BJ (cell line): ENCODE measurements at regions of chr15 and their contacts with region 1.

Region 1: GRCh38 chr15:63030101-63030551 is 12.4 kb upstream of the TPM1 start:
- DNase-seq: peak; percentile 76
- H3K4me3 ChIP-seq: no peak overlapping the region
- H3K27me3 ChIP-seq: no peaks in the 10 kb centered on the region
- CTCF ChIP-seq: no peak

Region 2: GRCh38 chr15:62770752-62771151 is 259.4 kb before region 1 on chr15:
- CTCF ChIA-PET with region 1: interaction called, 3 read pairs
- POLR2A ChIA-PET with region 1: interaction called, 14 read pairs
- DNase-seq: peak; percentile 68
- H3K4me3 ChIP-seq: no peak overlapping the region
- H3K27me3 ChIP-seq: no peaks in the 10 kb centered on the region
- CTCF ChIP-seq: 0 out of 2 replicates have a peak, but pooled peaks have one; percentile 2

Region 3: GRCh38 chr15:62989366-62990055 is 40.6 kb before region 1 on chr15:
- CTCF ChIA-PET with region 1: no interaction called
- POLR2A ChIA-PET with region 1: no interaction called
- DNase-seq: no peak
- H3K4me3 ChIP-seq: no peak overlapping the region
- H3K27me3 ChIP-seq: no peaks in the 10 kb centered on the region
- CTCF ChIP-seq: no peak

Region 4: DNA sequence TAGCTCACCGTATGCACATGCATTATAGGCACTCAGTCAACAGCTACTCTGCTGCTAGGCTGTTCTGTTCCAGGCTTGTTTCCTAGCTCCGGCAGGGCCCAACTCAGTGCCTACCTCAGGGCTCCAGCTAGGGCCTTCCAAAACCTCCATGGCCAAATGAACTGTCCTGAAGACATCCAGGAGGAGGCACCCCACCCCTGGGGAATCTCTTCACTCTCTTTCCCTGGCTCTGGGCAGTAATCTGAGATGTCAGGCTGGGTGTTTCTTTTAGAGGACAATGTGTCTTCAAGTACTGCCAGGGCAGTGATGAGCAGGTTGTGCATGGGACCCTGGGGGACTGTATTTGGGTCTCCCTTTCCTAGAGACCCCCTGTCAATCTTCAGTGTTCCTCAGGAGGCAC is 25.9 kb before region 1 on chr15:
- CTCF ChIA-PET with region 1: no interaction called
- POLR2A ChIA-PET with region 1: no interaction called
- DNase-seq: no peak
- H3K4me3 ChIP-seq: no peak overlapping the region
- H3K27me3 ChIP-seq: no peaks in the 10 kb centered on the region
- CTCF ChIP-seq: peak; percentile 13; the same call in 1 of the 2 replicates